ENCODE measurements at regions of chr2 and their contacts with region 1.

Region 1: DNA sequence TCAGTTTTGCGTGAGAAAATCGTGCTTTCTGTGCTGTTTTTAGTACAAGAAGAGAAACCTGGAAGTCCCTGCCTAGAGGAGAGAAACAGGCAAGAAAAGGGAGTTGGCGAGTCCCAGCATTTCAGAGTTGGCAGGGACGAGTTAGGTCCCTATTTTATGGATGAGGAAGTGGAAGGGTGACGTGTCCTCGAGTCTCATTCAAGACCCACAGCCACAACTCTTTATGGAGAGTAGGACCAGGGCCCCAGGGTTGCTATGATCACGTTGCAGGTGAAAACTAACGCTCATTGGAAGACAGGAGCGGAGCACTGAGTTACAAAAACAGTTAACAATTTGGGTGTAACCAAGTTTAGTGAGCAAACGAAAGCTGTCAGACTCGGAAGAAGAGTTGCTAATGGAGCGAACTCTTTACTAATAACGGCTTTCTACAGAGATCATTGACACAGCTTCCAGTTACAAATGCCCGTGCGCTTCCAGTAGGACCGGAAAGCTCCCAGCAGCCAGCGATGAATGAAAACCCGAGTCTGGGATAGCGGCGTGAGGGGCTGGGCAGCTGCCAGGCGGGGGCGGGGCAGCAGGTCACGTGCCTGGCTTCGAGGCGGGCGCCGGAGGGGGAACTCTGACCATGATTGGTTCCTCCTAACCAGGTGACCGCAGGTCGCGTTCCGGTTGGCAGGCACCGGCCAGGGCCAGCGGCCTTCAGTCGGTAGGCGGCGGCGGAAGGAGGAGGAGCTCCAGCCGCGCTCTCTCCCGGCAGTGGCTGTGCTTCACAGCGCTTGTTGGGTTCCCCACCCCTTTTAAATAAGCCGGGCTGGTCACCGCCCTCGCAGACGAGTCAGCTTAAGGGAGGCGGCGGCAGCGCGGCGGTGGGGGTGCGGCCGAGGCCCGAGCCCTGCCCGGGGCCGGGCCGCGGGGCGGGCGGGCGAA is at the start of gene CCNYL1:
- H3K4me3 Mint-ChIP-seq: peak within 1 kb of the TSS; percentile 97
- H3K27ac Mint-ChIP-seq: peak within 1 kb of the TSS; percentile 96
- H3K4me1 Mint-ChIP-seq: peaks cover 50% of the 10 kb centered on the region
- H3K27me3 Mint-ChIP-seq: no peaks in the 10 kb centered on the region

Region 2: GRCh38 chr2:207662203-207662602 is 48.9 kb before region 1 on chr2:
- intact Hi-C with region 1: loop called (anchors 1 kb)
- H3K4me3 Mint-ChIP-seq: no peak overlapping the region
- H3K27ac Mint-ChIP-seq: peak overlapping the region; percentile 35
- H3K4me1 Mint-ChIP-seq: peaks cover 39% of the 10 kb centered on the region
- H3K27me3 Mint-ChIP-seq: peaks cover 3% of the 10 kb centered on the region

Region 3: GRCh38 chr2:208101716-208102631 is 390.9 kb after region 1 on chr2:
- intact Hi-C with region 1: no loop called
- H3K4me3 Mint-ChIP-seq: peak overlapping the region; percentile 20
- H3K27ac Mint-ChIP-seq: no peak overlapping the region
- H3K4me1 Mint-ChIP-seq: peaks cover 30% of the 10 kb centered on the region
- H3K27me3 Mint-ChIP-seq: peaks cover 2% of the 10 kb centered on the region